Aorta (tissue), 5 donors: ENCODE measurements at regions of chr17 and their contacts with region 1.

Region 1: GRCh38 chr17:69523244-69523861 is 108.9 kb downstream of the MAP2K6 start:
- DNase-seq: no peak
- ATAC-seq: no peak
- H3K4me3 ChIP-seq: no peak overlapping the region
- H3K27ac ChIP-seq: no peak overlapping the region
- H3K4me1 ChIP-seq: no peaks in the 10 kb centered on the region
- H3K27me3 ChIP-seq: no peaks in the 10 kb centered on the region

Region 2: DNA sequence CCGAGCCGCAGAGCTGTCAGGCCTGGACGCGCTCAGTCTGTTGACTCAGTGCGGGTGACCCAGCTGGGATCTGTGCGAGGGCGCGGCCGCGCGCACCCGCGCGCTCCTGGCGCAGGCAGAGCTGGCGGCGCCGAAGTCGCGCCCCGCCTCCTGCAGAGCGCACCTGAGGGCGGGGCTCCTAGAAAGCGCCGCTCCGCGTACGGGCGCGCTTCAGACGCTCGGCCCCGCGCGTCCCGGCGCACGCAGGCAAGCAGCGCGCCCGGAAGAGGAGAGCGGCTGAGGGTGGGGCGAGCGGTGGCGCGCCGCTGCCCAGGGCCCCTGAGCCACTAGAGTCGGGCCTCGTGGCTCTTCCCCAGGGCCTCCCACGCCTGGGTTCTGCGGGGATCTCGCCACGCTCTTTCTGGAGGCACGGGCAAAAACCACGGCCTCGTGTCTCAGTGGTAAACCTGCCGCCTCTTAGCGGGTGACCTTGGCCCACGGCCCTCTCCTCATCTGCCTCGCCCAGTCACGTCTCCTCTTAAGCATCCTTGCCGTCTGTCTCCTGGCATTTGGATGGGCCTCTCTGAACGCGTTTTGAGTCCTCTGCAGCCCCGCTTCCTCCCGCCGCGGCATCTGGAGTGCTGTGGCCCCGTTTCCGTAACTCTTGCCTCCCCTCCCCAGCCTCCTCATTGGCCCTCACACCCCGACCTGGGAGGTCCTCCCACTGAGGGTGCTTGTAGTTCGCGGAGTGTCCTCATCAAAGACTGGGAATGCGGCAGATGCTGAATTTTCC is 196.1 kb before region 1 on chr17 and contains the start of gene ABCA5:
- intact Hi-C with region 1: loop called in 1 of 2 experiments (anchors 10 kb)
- DNase-seq: peak; percentile 86 to 92
- ATAC-seq: peak; percentile 96
- H3K4me3 ChIP-seq: peak within 1 kb of the TSS; percentile 49 to 74
- H3K27ac ChIP-seq: no peak within 1 kb of the TSS
- H3K4me1 ChIP-seq: peaks cover 0 to 3% of the 10 kb centered on the region in 2 donors
- H3K27me3 ChIP-seq: no peaks in the 10 kb centered on the region
- total RNA-seq, gene ABCA5: 20.1 to 29.6 TPM

Region 3: DNA sequence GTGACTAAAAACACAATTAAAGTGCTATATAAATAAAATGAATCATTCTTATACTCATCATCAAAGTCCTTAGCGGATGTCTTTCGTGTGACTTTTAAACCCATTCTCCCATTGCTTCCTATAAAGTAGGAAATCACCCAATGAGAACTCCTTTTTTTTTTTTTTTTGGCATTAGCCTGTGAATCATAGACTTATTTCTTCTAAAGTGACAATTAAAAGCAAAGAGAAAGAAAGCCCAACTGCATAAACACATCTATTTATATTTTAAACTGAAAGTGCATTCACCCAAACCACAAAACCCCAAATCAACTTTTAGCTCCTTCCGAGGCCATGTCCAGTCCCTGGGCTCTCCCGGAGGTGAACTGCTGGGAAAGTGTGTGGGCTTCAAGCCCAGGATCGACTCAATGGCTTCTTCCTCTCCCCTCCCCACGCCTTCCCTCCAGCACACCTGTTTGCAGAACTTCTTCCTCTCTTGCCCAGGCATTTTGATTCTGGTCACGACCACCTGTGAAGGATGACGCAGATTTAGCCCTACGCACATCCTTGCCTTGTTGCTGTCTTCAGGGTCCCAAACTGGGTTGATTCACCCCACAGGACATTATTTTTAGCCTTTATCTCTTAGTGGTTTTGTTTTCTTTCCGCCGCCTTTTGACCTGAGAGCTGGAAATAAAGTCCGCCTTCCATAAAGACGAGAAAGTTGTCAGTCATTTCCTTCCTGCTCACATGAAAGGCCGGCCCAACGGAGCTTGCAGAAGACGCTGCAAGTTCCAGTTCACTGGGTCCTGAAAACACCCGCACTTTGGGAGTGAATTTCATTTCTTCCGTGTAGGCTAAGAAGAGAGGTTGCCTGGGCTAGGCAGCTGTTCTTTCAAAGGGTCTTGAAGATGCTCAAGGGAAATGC is 58.0 kb after region 1 on chr17:
- intact Hi-C with region 1: no loop called
- DNase-seq: no peak
- ATAC-seq: no peak
- H3K4me3 ChIP-seq: no peak overlapping the region
- H3K27ac ChIP-seq: no peak overlapping the region
- H3K4me1 ChIP-seq: no peaks in the 10 kb centered on the region
- H3K27me3 ChIP-seq: no peaks in the 10 kb centered on the region

Region 4: GRCh38 chr17:69878661-69879060 is 355.3 kb after region 1 on chr17:
- intact Hi-C with region 1: no loop called
- DNase-seq: no peak
- ATAC-seq: no peak
- H3K4me3 ChIP-seq: no peak overlapping the region
- H3K27ac ChIP-seq: no peak overlapping the region
- H3K4me1 ChIP-seq: no peaks in the 10 kb centered on the region
- H3K27me3 ChIP-seq: no peaks in the 10 kb centered on the region

Region 5: GRCh38 chr17:70552230-70552981 is 1029.1 kb after region 1 on chr17:
- intact Hi-C with region 1: loop called (anchors 5 kb)
- DNase-seq: no peak
- ATAC-seq: peak; percentile 68
- H3K4me3 ChIP-seq: no peak overlapping the region
- H3K27ac ChIP-seq: no peak overlapping the region
- H3K4me1 ChIP-seq: no peaks in the 10 kb centered on the region
- H3K27me3 ChIP-seq: no peaks in the 10 kb centered on the region

Region 6: GRCh38 chr17:70622368-70623260 is 1099.3 kb after region 1 on chr17:
- intact Hi-C with region 1: loop called in 1 of 2 experiments (anchors 10 kb)
- DNase-seq: no peak
- ATAC-seq: no peak
- H3K4me3 ChIP-seq: no peak overlapping the region
- H3K27ac ChIP-seq: no peak overlapping the region
- H3K4me1 ChIP-seq: no peaks in the 10 kb centered on the region
- H3K27me3 ChIP-seq: no peaks in the 10 kb centered on the region